Activated CD4-positive, alpha-beta memory T cell treated with anti-CD3 and anti-CD28 coated beads for 36 hours (primary cell): ENCODE measurements at regions of chr5 and their contacts with region 1.

Region 1: GRCh38 chr5:159412284-159413046 is 82.2 kb upstream of the IL12B start:
- DNase-seq: peak; percentile 84
- H3K4me3 Mint-ChIP-seq: no peak overlapping the region
- H3K27ac Mint-ChIP-seq: peak overlapping the region; percentile 30
- H3K4me1 Mint-ChIP-seq: peaks cover 53% of the 10 kb centered on the region
- H3K27me3 Mint-ChIP-seq: peaks cover 8% of the 10 kb centered on the region

Region 2: DNA sequence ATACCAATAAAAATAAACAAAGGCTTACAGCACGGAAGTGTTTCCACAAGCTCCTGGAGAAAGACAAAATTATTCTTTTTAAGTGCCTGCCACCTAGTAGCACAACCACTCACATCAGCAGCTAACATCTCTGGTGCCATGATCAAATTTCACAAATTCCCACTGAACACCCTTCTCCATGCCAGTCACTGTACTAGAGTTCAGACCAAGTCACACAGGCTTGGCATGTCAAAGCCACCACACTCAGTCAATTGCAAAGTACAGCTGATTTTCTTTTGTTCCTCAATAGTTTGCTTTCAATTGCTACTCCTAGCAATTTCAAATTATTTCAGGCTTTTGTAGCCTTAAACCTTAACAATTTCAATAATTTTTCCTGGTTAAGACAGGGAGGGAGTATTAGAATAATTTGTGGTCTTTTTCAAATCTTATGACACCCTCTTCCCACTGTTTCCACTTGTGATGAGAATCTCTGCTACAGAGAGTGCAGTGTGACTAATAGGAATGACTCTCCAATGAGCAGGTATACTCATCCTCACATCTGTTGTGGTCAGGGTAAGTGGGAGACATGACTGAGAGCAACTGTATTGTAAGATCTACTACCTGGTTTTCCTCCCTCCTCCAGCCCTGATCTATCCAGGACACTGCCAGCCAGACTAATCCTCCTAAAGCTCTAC is 249.3 kb before region 1 on chr5:
- CTCF ChIA-PET with region 1: no interaction called
- POLR2A ChIA-PET with region 1: no interaction called
- intact Hi-C with region 1: loop called (anchors 5 kb)
- DNase-seq: peak; percentile 24
- H3K4me3 Mint-ChIP-seq: no peak overlapping the region
- H3K27ac Mint-ChIP-seq: peak overlapping the region; percentile 66
- H3K4me1 Mint-ChIP-seq: peaks cover 41% of the 10 kb centered on the region
- H3K27me3 Mint-ChIP-seq: no peaks in the 10 kb centered on the region

Region 3: DNA sequence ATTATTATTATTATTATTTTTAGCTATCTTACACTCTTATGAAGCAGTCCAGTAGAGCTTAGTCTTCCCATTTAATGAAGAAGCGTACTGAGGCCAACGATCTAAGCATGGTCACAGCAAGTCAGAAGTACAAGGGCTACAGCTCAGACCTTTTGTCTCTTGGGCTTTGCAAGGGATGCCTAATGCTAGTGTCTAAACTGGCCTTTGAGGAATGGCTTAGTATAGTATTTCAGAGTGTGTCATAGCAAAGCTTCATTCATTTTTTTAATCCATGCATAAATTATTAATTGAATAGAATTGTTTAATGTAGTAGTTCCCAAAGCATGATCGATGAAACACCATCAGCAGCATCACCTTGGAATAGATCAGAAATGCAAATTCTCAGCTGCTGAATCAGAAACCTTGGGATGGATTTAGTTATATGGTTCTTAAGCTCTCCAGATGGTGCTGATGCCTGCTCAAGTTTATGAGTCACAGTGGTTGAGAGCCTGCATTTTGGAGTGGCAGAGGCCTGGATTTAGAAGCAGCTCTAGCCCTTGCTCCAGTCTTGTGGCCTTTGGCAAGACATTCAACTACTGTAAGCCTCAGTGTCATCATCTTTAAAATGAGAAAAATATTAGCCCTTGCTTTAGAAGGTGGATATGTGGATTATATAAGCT is 88.2 kb before region 1 on chr5:
- CTCF ChIA-PET with region 1: no interaction called
- POLR2A ChIA-PET with region 1: no interaction called
- intact Hi-C with region 1: no loop called
- DNase-seq: no peak
- H3K4me3 Mint-ChIP-seq: no peak overlapping the region
- H3K27ac Mint-ChIP-seq: no peak overlapping the region
- H3K4me1 Mint-ChIP-seq: no peaks in the 10 kb centered on the region
- H3K27me3 Mint-ChIP-seq: peaks cover 2% of the 10 kb centered on the region

Region 4: DNA sequence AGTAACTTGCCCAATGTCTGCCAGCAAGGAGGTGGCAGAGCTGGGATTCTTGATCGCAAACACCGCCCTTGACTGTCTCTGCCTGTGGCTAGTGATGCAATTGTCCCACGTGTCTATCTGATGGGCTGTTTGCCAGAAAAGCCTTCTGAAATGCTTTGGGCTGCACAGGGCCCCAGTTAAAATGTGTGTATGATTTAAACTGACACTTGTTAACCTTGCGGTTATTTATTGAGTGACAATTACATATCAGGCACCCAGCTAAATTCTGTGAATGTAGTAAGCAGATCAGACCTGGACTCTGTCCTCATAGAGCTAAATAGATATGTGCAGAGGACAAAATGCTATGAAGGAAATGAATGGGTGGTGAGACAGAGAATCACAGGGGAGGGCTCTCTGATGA is 70.6 kb before region 1 on chr5:
- CTCF ChIA-PET with region 1: no interaction called
- POLR2A ChIA-PET with region 1: interaction called, 6 read pairs
- intact Hi-C with region 1: loop called (anchors 1 kb)
- DNase-seq: peak; percentile 74
- H3K4me3 Mint-ChIP-seq: no peak overlapping the region
- H3K27ac Mint-ChIP-seq: no peak overlapping the region
- H3K4me1 Mint-ChIP-seq: peaks cover 59% of the 10 kb centered on the region
- H3K27me3 Mint-ChIP-seq: no peaks in the 10 kb centered on the region

Region 5: GRCh38 chr5:159427180-159428012 is 14.9 kb after region 1 on chr5:
- CTCF ChIA-PET with region 1: interaction called, 9 read pairs
- POLR2A ChIA-PET with region 1: interaction called, 5 read pairs
- intact Hi-C with region 1: loop called (anchors 1 kb)
- DNase-seq: no peak
- H3K4me3 Mint-ChIP-seq: no peak overlapping the region
- H3K27ac Mint-ChIP-seq: no peak overlapping the region
- H3K4me1 Mint-ChIP-seq: peaks cover 26% of the 10 kb centered on the region
- H3K27me3 Mint-ChIP-seq: peaks cover 3% of the 10 kb centered on the region

Region 6: GRCh38 chr5:159581502-159582249 is 169.2 kb after region 1 on chr5:
- CTCF ChIA-PET with region 1: no interaction called
- POLR2A ChIA-PET with region 1: no interaction called
- intact Hi-C with region 1: no loop called
- DNase-seq: no peak
- H3K4me3 Mint-ChIP-seq: no peak overlapping the region
- H3K27ac Mint-ChIP-seq: no peak overlapping the region
- H3K4me1 Mint-ChIP-seq: no peaks in the 10 kb centered on the region
- H3K27me3 Mint-ChIP-seq: no peaks in the 10 kb centered on the region

Region 7: DNA sequence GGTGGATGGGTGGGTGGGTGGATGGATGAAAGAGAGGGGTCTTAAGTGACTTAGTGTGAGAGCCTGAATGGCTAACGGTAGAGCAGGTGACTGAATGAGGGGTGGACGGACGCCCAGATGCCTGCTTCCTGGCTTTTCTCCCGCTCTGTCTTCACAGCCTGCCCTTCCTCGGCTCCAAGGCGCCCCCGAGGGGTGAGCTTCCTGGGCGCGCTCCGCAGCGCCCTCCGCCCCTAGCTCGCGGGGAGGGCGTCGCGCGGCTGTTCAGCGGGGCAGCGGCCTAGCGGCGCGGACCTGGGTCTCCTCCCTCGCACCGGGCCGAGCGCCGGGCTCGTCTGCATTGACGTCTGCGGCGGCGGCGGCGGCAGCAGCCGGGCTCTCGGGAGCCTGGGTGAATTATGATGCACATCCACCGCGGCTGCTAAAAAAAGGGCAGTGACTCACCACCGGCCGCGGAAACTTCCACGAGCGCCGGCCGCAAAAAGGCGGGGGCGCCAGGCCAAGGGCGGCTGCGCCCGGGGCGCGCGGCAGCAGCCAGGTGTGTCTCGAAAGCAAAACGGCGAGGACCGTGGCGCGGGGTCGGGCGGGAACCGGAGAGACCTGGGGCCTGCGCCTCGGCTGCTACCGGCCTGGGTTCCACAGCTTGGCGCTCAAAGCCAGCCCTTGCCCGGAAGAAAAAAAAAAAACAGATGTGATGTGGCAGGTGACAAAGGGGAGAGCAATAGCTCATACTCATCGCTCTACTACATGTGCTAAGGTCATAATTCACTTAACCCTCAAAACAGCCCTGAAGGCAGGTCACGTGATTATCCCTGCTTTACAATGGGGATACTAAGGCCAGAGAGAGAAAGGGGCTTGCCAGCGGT is 360.8 kb after region 1 on chr5:
- CTCF ChIA-PET with region 1: no interaction called
- POLR2A ChIA-PET with region 1: no interaction called
- intact Hi-C with region 1: loop called (anchors 5 kb)
- DNase-seq: peak; percentile 92
- H3K4me3 Mint-ChIP-seq: peak overlapping the region; percentile 39
- H3K27ac Mint-ChIP-seq: peak overlapping the region; percentile 69
- H3K4me1 Mint-ChIP-seq: peaks cover 14% of the 10 kb centered on the region
- H3K27me3 Mint-ChIP-seq: peaks cover 45% of the 10 kb centered on the region